ENCODE measurements at regions of chr9 and their contacts with region 1.

Region 1: GRCh38 chr9:2916382-2916985 is 72.6 kb upstream of the PUM3 start:
- DNase-seq: no peak
- H3K4me3 ChIP-seq: no peak overlapping the region
- H3K27ac ChIP-seq: no peak overlapping the region
- H3K4me1 ChIP-seq: no peaks in the 10 kb centered on the region
- H3K27me3 ChIP-seq: no peaks in the 10 kb centered on the region
- CTCF ChIP-seq: no peak
- EP300 ChIP-seq: no peak
- POLR2A ChIP-seq: no peak

Region 2: DNA sequence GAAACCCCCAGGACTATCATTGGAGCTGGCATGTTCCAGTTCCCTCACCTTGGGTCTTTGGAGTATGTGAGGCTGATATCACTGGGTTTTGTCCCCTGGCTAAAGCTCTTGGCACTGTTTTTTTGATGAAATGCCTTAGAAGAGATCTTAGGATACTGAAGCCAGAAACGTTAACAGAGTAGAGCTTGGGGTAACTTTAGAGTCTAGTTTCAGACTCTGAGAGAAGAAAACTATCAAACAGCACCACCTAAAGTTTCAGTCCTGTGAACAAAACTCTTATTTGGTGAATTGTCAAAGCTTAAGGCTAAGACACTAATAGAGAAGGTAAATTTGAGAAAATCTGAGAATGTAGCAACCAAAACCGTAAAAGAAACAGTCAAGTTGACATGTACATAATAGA is 39.1 kb after region 1 on chr9:
- in situ Hi-C with region 1: no loop called
- intact Hi-C with region 1: no loop called
- DNase-seq: no peak
- H3K4me3 ChIP-seq: no peak overlapping the region
- H3K27ac ChIP-seq: no peak overlapping the region
- H3K4me1 ChIP-seq: no peaks in the 10 kb centered on the region
- H3K27me3 ChIP-seq: no peaks in the 10 kb centered on the region
- CTCF ChIP-seq: no peak
- EP300 ChIP-seq: no peak
- POLR2A ChIP-seq: no peak

Region 3: DNA sequence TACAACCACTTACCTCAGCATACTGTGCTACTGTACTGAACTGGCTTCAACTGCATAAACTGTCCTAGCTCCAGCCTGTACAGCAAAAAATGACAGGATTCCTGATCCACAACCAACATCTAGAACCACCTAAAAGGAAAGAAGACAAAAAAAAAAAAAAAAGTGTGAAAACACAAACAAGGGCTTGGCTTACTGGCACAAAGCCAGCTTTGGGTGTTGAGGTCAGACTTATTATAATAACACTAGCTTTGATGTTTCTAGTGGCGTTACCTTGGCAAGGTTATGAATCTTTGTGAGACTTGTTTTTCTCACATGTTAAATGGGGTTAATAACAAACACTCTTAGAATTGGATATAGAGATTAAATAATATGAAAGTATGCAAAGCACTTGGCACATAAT is 75.9 kb after region 1 on chr9:
- in situ Hi-C with region 1: no loop called
- intact Hi-C with region 1: loop called (anchors 2 kb)
- DNase-seq: no peak
- H3K4me3 ChIP-seq: no peak overlapping the region
- H3K27ac ChIP-seq: no peak overlapping the region
- H3K4me1 ChIP-seq: no peaks in the 10 kb centered on the region
- H3K27me3 ChIP-seq: no peaks in the 10 kb centered on the region
- CTCF ChIP-seq: no peak
- EP300 ChIP-seq: no peak
- POLR2A ChIP-seq: no peak